Calu3 (cell line): ENCODE measurements at regions of chr13 and their contacts with region 1.

Region 1: DNA sequence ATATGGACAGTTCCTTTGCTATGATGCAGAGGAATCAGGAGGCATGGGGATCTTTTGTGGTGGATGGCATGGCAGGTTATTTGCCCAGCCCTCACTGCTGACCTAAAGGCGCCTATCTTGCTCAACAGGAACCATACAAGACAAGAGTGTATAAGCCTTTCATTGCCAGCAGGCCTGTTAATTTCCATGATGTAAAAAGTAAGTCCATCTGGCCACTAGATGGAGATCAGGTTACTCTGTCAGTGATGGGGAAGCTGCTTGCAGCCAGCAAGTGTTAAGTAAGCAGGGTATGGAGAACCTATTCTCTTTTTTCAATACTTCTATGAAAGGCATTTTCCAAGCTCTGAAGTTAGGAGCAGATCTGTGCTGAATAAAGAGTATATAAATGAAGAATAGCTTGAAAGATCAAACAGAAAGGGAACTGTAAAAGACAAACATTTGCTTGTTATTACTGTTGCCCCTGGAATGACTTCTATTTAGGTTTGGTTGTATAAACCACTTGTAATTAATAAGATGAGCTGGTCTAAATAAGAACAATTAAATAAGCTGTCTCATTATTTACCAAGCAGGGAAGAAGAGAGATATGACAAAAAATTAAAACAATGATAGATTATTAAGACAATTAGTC is 210.9 kb downstream of the RGCC start:
- DNase-seq: peak; percentile 39
- H3K4me3 Mint-ChIP-seq: no peak overlapping the region
- H3K27ac Mint-ChIP-seq: no peak overlapping the region
- H3K4me1 Mint-ChIP-seq: no peaks in the 10 kb centered on the region
- H3K27me3 Mint-ChIP-seq: no peaks in the 10 kb centered on the region
- CTCF ChIP-seq: no peak

Region 2: GRCh38 chr13:41751277-41751676 is 83.0 kb after region 1 on chr13:
- CTCF ChIA-PET with region 1: no interaction called
- intact Hi-C with region 1: no loop called
- DNase-seq: no peak
- H3K4me3 Mint-ChIP-seq: no peak overlapping the region
- H3K27ac Mint-ChIP-seq: no peak overlapping the region
- H3K4me1 Mint-ChIP-seq: no peaks in the 10 kb centered on the region
- H3K27me3 Mint-ChIP-seq: no peaks in the 10 kb centered on the region
- CTCF ChIP-seq: no peak

Region 3: DNA sequence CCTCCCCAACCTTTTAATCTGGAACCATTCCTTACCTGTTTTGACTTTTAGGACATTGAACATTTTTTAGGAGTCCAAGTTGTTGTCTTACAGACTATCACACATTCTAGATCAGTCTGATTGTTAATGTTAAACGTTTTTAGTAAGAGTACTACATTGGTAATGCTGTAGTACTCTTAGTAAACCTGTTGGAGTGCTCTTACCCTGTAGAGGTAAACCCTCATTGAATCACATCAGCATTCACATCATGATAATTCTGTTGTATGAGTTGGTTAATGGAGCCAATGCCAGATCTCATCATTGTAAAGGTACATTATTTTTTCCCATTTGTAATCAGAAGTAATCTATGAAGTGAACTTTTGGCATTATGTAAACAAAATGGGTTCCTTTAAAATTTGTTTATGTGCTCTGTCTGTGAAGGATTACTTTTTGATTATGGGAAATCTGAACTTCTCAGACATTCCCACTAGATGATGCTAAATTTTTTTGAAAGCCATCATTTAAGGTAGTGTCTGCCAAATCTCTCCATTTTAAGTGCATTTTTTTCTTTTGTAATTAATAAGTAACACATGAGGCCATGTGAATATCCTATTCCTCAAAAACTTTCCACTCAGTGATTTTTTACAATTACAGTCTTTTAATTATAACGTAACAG is 237.5 kb after region 1 on chr13:
- CTCF ChIA-PET with region 1: no interaction called
- intact Hi-C with region 1: loop called (anchors 10 kb)
- DNase-seq: no peak
- H3K4me3 Mint-ChIP-seq: no peak overlapping the region
- H3K27ac Mint-ChIP-seq: no peak overlapping the region
- H3K4me1 Mint-ChIP-seq: no peaks in the 10 kb centered on the region
- H3K27me3 Mint-ChIP-seq: no peaks in the 10 kb centered on the region
- CTCF ChIP-seq: no peak

Region 4: DNA sequence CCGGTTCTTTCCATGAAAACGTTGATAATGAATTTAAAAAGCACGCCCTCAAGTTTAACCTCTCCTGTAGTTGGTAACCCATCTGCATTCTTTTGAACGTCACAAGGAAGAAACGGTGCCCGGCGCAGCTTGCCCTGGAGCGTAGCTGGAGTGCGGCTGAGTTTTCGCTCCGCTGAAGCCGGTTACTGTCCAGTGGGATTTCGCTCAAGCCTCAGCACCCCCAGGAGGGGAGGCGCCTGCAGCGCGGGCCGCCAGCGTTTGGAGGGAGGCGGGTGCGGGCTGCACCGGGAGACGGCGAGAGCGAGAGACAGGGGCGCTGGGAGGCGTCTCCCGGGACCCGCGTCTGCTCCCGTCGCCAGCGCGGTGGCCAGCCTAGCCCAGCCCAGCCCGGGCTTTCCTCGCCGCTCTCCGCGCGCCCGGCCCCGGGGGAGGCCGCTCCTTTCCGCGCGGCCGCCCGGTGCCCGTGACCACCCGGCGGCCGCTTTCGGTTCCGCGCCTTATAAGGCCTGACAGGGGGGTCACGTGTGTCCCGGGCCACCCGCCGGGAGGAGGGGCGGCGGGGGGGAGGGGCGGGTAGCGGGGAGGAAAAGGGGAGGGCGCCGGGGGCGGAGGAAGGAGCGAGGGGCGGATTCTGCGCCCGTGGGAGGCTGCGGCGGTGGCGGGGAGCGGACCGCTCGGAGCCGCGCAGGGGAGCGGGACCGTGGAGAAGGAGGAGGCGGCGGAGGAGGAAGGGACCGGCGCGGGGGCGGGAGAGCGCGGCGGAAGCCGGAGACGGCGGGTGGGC is 371.9 kb after region 1 on chr13:
- CTCF ChIA-PET with region 1: no interaction called
- intact Hi-C with region 1: loop called (anchors 5 kb)
- DNase-seq: peak; percentile 84
- H3K4me3 Mint-ChIP-seq: peak overlapping the region; percentile 86
- H3K27ac Mint-ChIP-seq: peak overlapping the region; percentile 62
- H3K4me1 Mint-ChIP-seq: peaks cover 9% of the 10 kb centered on the region
- H3K27me3 Mint-ChIP-seq: no peaks in the 10 kb centered on the region
- CTCF ChIP-seq: no peak

Region 5: DNA sequence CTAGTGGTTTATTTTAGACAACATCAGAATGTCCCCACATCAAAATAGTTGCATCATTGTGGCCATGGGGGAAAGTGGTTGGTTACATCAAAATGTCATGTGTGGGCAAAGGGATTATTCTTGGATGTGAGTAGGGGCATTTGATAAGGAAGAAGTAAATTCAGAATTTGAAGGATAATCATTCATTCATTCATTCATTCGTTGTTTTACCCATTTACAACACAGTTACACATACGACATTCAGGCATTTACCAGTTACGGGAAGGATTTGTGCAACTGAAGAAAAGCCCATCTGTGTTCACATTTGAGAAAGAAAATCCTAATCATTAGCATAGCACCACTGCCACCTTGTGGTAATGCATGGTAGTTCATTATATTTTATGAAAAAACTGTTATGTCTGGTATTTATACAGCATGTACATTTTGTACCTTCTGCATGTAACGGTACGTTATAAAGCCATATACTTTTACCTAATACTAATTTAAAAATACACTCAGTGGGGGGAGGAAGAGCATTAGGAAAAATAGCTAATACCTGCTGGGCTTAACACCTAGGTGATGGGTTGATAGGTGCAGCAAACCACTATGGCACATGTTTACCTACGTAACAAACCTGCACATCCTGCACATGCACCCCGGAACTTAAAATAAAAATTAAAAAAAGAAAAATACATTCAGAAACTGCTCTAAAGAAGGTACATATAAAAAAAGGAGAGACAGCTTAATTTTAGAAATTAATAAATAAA is 442.3 kb after region 1 on chr13:
- CTCF ChIA-PET with region 1: no interaction called
- intact Hi-C with region 1: loop called (anchors 1 kb)
- DNase-seq: peak; percentile 24
- H3K4me3 Mint-ChIP-seq: no peak overlapping the region
- H3K27ac Mint-ChIP-seq: no peak overlapping the region
- H3K4me1 Mint-ChIP-seq: peaks cover 42% of the 10 kb centered on the region
- H3K27me3 Mint-ChIP-seq: no peaks in the 10 kb centered on the region
- CTCF ChIP-seq: no peak